ENCODE measurements at regions of chr3 and their contacts with region 1.

Region 1: GRCh38 chr3:44913868-44914468 is 39.6 kb downstream of the TGM4 start:
- DNase-seq: peak in 2 of 3 donors; percentile 81 to 86
- ATAC-seq: peak; percentile 90
- H3K4me3 ChIP-seq: no peak overlapping the region
- H3K4me1 ChIP-seq: no peaks in the 10 kb centered on the region
- CTCF ChIP-seq: peak; percentile 73

Region 2: DNA sequence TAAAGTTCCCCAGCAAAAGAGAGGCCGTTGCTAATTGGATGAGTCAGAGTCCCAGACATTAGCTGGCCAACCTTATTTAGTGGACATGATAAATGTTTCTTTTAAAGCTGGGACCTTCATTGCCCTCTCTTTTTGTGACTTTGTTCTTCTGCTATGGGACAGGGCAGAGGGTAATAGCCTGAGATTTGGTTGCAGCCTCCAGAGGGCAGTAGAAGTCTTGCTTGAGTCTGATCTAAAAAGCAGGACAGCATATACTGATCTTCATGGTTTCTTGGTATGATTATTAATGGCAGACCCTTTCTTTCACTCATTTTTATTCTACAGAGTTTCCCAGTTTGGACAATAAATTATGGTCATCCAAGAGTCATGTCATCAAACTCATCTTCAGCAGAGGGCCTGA is 384.0 kb before region 1 on chr3:
- intact Hi-C with region 1: loop called (anchors 5 to 10 kb)
- DNase-seq: peak in 1 of 3 donors; percentile 40
- ATAC-seq: peak; percentile 51
- H3K4me3 ChIP-seq: no peak overlapping the region
- H3K4me1 ChIP-seq: peaks cover 10% of the 10 kb centered on the region
- CTCF ChIP-seq: no peak

Region 3: GRCh38 chr3:44814751-44815150 is 99.2 kb before region 1 on chr3:
- intact Hi-C with region 1: no loop called
- DNase-seq: no peak
- ATAC-seq: no peak
- H3K4me3 ChIP-seq: no peak overlapping the region
- H3K4me1 ChIP-seq: no peaks in the 10 kb centered on the region
- CTCF ChIP-seq: no peak

Measured in mucosa of descending colon (tissue), 3 donors.